ENCODE measurements at regions of chr6 and their contacts with region 1.

Region 1: GRCh38 chr6:30599625-30600324 is 17.3 kb downstream of the PPP1R10 start:
- DNase-seq: no peak
- ATAC-seq: peak; percentile 4; the same call in 1 of the 2 replicates
- H3K4me3 ChIP-seq: no peak overlapping the region
- H3K27ac ChIP-seq: no peak overlapping the region
- H3K4me1 ChIP-seq: no peaks in the 10 kb centered on the region
- H3K27me3 ChIP-seq: no peaks in the 10 kb centered on the region
- CTCF ChIP-seq: no peak

Region 2: GRCh38 chr6:30418448-30418847 is 181.3 kb before region 1 on chr6:
- CTCF ChIA-PET with region 1: interaction called, 14 read pairs
- POLR2A ChIA-PET with region 1: no interaction called
- in situ Hi-C with region 1: no loop called
- intact Hi-C with region 1: no loop called
- DNase-seq: no peak
- ATAC-seq: no peak
- H3K4me3 ChIP-seq: no peak overlapping the region
- H3K27ac ChIP-seq: no peak overlapping the region
- H3K4me1 ChIP-seq: no peaks in the 10 kb centered on the region
- H3K27me3 ChIP-seq: no peaks in the 10 kb centered on the region; the same call in none of the 2 replicates
- CTCF ChIP-seq: no peak

Region 3: GRCh38 chr6:30483677-30484279 is 116.0 kb before region 1 on chr6:
- CTCF ChIA-PET with region 1: interaction called, 5 read pairs
- POLR2A ChIA-PET with region 1: no interaction called
- in situ Hi-C with region 1: no loop called
- intact Hi-C with region 1: loop called (anchors 5 kb)
- DNase-seq: no peak
- ATAC-seq: no peak
- H3K4me3 ChIP-seq: no peak overlapping the region
- H3K27ac ChIP-seq: no peak overlapping the region
- H3K4me1 ChIP-seq: peaks cover 9% of the 10 kb centered on the region
- H3K27me3 ChIP-seq: peaks cover 26% of the 10 kb centered on the region
- CTCF ChIP-seq: peak; percentile 66

Region 4: DNA sequence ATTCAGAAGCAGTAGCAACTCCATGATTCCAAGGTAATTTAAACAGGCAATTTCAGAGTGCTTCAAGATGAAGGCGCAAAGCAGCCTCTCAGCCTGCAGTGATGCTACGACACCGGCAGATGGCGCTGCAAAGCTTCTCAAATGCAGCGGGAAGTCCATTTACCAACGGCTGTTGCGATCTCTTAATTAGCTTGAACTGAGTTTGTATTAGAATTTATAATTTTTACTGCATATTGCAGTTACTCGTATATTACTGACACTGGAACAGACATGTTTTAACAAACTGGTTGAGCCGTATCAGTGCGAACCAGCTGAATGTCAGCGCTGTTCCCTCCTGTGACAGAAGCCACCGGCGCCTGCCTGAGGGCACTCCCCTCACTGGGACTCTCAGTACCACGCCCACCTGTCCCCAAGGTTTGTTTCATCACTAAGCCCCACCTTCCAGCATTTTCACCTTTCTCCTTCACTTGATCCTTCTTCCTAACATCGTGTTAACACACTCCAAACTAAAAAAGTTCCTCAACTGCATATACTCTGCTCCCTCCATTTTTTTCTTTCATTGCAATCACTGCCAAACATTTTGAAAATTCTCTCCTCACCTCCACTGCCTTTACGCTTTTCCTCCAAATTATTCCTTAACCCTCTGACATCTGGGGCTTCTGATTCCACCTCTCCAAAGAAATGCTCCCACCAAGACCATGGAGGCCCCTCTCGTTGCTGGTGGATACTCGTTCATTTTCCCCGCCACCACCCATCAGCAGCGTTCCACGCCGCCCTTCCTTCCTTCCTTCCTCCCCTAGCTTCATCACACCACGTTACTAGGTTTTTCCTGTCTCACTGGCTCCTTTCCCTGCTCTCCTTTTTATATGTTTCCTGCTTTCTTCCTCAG is 58.0 kb before region 1 on chr6:
- CTCF ChIA-PET with region 1: interaction called, 16 read pairs
- POLR2A ChIA-PET with region 1: no interaction called
- in situ Hi-C with region 1: no loop called
- intact Hi-C with region 1: no loop called
- DNase-seq: peak; percentile 74
- ATAC-seq: peak; percentile 90
- H3K4me3 ChIP-seq: peak overlapping the region; percentile 25 to 49
- H3K27ac ChIP-seq: no peak overlapping the region
- H3K4me1 ChIP-seq: no peaks in the 10 kb centered on the region; the same call in 1 of the 2 replicates
- H3K27me3 ChIP-seq: no peaks in the 10 kb centered on the region
- CTCF ChIP-seq: peak; percentile 98

Region 5: DNA sequence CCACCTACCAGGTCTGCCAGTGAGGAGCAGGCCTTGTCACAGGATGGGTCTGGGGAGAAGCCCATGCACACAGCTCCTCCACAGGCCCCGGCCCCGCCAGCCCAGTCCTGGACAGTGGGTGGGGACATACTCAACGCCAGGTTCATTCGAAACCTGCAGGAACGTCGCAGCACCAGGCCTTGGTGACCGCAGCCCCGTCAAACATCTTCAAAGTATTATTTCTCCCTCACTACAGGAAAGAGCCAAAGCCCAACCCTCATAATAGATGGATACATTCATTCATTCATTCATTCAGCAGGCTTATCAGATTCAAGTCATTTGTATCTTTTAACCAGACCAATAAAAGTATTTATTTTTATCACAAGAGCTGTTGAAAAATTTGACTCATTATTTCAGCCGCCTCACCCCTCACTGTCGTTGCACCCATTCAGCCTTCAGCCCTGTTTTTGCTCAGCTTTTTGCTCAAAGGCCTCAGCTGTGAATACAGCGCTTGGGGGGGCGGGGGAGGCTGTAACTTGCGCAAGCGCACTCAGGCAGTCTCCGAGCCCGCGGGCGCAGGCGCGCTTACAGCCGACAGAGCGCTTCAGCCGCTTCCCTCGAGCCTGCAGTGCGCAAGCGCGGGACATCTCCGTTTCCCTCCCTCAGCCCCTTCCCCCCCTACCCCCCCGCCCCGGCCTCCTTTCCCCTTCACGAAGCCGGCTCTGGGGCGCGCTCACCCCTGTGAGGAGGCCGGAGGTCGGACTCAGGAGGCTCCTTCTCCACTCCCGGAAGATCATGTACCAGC is 46.9 kb after region 1 on chr6 and contains the start of gene C6orf136:
- CTCF ChIA-PET with region 1: no interaction called
- POLR2A ChIA-PET with region 1: no interaction called
- in situ Hi-C with region 1: no loop called
- intact Hi-C with region 1: no loop called
- DNase-seq: peak; percentile 54
- ATAC-seq: peak; percentile 89
- H3K4me3 ChIP-seq: peak within 1 kb of the TSS; percentile 83 to 93
- H3K27ac ChIP-seq: peak within 1 kb of the TSS; percentile 93
- H3K4me1 ChIP-seq: peaks cover 17% of the 10 kb centered on the region
- H3K27me3 ChIP-seq: no peaks in the 10 kb centered on the region
- CTCF ChIP-seq: no peak
- total RNA-seq, gene C6orf136: 30.8 TPM

Region 6: DNA sequence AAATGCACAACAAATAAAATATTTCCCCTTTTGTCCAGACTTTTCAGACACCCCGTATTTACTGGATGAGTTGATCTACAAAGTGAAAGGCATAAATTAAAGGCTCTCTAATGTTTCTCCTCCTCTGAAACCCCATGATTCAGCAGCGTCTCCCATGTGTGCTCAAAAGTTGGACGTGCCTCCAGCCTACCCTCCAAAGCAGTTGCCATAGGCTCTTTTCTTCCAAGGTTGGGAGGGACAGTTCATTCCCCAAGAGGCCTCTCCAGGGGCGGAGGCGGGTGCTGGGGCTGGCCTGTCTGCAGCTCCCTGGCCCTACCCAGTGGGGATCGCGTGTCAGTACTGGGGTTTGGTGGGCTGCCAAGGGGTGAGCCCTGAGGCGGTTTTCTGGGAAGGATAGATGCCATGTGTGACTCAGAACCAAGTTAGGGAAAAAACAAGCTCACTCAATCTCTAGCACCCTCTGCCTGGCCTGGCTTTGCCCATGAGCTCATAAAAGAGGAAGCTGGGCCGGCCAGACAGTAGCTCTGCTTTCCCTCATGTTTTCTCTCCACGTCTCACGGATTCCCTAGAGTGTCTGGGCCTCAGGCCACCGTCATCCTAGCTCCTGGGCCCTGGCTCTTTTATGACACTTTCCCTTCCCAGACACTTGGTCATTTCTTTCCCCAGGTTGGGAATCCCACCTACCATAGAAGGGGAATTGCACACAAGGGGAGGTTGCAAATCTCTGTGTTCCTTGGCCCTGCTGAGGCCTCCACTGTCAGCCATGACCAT is 152.6 kb after region 1 on chr6:
- CTCF ChIA-PET with region 1: no interaction called
- POLR2A ChIA-PET with region 1: no interaction called
- in situ Hi-C with region 1: no loop called
- intact Hi-C with region 1: no loop called
- DNase-seq: peak; percentile 92
- ATAC-seq: peak; percentile 90
- H3K4me3 ChIP-seq: 0 out of 4 replicates have a peak overlapping the region, but pooled peaks of 1 of the 2 experiments have one; percentile 12
- H3K27ac ChIP-seq: peak overlapping the region; percentile 94
- H3K4me1 ChIP-seq: peaks cover 53% of the 10 kb centered on the region
- H3K27me3 ChIP-seq: no peaks in the 10 kb centered on the region
- CTCF ChIP-seq: no peak

Region 7: GRCh38 chr6:30960907-30961673 is 361.3 kb after region 1 on chr6:
- CTCF ChIA-PET with region 1: no interaction called
- POLR2A ChIA-PET with region 1: no interaction called
- in situ Hi-C with region 1: no loop called
- intact Hi-C with region 1: no loop called
- DNase-seq: no peak
- ATAC-seq: no peak
- H3K4me3 ChIP-seq: no peak overlapping the region
- H3K27ac ChIP-seq: no peak overlapping the region
- H3K4me1 ChIP-seq: no peaks in the 10 kb centered on the region
- H3K27me3 ChIP-seq: peaks cover 3% of the 10 kb centered on the region; the same call in 1 of the 2 replicates
- CTCF ChIP-seq: no peak

Region 8: GRCh38 chr6:31042806-31043205 is 443.0 kb after region 1 on chr6:
- CTCF ChIA-PET with region 1: no interaction called
- POLR2A ChIA-PET with region 1: no interaction called
- in situ Hi-C with region 1: no loop called
- intact Hi-C with region 1: no loop called
- DNase-seq: peak; percentile 18
- ATAC-seq: peak; percentile 89
- H3K4me3 ChIP-seq: no peak overlapping the region
- H3K27ac ChIP-seq: no peak overlapping the region
- H3K4me1 ChIP-seq: peaks cover 4% of the 10 kb centered on the region
- H3K27me3 ChIP-seq: no peaks in the 10 kb centered on the region
- CTCF ChIP-seq: peak; percentile 84